AG04450 (cell line): ENCODE measurements at regions of chr19 and their contacts with region 1.

Region 1: GRCh38 chr19:3494051-3494450 is 6.4 kb downstream of the DOHH start:
- DNase-seq: no peak
- H3K4me3 ChIP-seq: no peak overlapping the region
- H3K27ac ChIP-seq: no peak overlapping the region
- H3K27me3 ChIP-seq: no peaks in the 10 kb centered on the region
- CTCF ChIP-seq: no peak

Region 2: DNA sequence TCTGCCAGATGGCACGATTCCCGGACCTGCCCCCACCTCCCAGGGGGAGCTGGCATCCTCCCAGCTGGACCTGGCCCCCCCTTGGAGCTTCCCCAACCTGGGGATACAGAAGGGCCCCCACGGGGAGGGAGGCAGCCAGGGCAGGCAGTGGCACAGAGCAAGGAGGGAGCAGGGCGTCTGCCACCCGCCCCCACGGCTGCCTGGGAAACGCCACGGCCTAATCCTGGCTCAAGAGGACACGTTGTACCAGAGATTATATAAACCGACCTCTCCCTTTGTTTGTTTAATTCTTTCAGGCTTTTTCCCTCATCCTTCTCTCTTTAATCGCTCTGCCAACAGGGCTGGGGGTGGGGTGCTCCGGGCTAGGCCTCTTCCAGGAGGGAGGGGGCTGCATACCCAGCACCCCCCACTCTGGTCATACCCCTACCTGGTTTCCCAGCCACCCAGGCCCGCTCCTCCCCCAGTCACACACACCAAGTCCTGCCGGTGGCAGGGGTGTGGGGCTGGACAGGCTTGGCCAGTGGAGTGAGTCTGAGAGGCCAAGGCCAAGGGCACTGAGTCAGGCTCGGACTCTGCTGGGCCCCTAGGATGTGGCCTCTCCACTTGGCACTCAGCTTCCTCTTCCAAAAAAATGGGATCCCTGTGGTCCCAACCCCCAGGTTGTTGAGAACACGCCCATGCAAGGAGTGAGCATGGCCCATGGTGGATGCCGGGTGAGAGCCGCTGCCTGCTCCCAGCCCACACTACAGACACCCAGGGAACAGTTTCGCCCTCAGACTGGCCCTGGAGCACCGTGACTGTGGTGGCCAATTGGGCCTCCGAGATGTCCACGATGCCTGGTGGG is 157.1 kb before region 1 on chr19:
- CTCF ChIA-PET with region 1: no interaction called
- POLR2A ChIA-PET with region 1: interaction called, 13 read pairs
- DNase-seq: peak; percentile 18
- H3K4me3 ChIP-seq: no peak overlapping the region
- H3K27ac ChIP-seq: peak overlapping the region; percentile 70
- H3K27me3 ChIP-seq: no peaks in the 10 kb centered on the region
- CTCF ChIP-seq: no peak

Region 3: GRCh38 chr19:3463714-3464586 is 30.1 kb before region 1 on chr19:
- CTCF ChIA-PET with region 1: no interaction called
- POLR2A ChIA-PET with region 1: no interaction called
- DNase-seq: no peak
- H3K4me3 ChIP-seq: no peak overlapping the region
- H3K27ac ChIP-seq: no peak overlapping the region
- H3K27me3 ChIP-seq: no peaks in the 10 kb centered on the region
- CTCF ChIP-seq: no peak

Region 4: GRCh38 chr19:3544742-3545668 is 51.0 kb after region 1 on chr19:
- CTCF ChIA-PET with region 1: no interaction called
- POLR2A ChIA-PET with region 1: no interaction called
- DNase-seq: no peak
- H3K4me3 ChIP-seq: no peak overlapping the region
- H3K27ac ChIP-seq: no peak overlapping the region
- H3K27me3 ChIP-seq: no peaks in the 10 kb centered on the region
- CTCF ChIP-seq: peak; percentile 91

Region 5: DNA sequence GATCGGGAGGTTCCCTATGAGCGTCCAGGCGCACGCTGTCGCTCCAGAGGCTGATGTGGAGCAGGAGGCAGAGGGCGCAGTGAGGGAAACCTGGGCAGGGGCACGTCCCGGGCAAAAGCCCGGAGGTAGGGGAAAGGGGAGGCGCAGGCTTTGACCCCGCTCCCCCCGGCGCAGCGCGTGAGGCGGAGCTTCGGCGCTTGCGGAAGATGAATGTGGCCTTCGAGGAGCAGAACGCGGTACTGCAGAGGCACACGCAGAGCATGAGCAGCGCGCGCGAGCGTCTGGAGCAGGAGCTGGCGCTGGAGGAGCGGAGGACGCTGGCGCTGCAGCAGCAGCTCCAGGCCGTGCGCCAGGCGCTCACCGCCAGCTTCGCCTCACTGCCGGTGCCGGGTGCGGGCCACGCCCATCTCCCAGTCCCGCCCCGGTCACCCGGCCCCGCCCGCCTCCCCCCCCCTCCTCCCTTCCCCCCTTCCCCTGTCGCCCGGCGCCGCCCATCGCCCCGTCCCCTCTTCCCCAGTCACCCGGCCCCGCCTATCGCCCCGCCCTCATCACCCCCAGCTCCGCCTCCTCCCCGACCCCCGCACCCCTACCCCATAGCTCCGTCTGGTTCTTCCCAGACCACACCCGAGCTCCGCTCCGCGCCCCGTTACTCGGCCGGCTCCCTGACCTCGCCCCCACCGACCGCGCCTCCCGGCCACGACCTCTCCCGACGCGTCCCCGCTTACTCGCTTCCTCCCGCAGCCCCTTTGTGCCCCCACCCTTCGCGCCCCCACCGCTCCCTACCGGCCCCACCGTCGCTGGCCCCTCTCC is 82.9 kb after region 1 on chr19:
- CTCF ChIA-PET with region 1: no interaction called
- POLR2A ChIA-PET with region 1: no interaction called
- DNase-seq: no peak
- H3K4me3 ChIP-seq: peak overlapping the region; percentile 17; the same call in 1 of the 2 replicates
- H3K27ac ChIP-seq: no peak overlapping the region
- H3K27me3 ChIP-seq: no peaks in the 10 kb centered on the region
- CTCF ChIP-seq: no peak